Activated B cell treated with CpG ODN at 0.5 μM for 24 hours (primary cell): ENCODE measurements at regions of chr3 and their contacts with region 1.

Region 1: DNA sequence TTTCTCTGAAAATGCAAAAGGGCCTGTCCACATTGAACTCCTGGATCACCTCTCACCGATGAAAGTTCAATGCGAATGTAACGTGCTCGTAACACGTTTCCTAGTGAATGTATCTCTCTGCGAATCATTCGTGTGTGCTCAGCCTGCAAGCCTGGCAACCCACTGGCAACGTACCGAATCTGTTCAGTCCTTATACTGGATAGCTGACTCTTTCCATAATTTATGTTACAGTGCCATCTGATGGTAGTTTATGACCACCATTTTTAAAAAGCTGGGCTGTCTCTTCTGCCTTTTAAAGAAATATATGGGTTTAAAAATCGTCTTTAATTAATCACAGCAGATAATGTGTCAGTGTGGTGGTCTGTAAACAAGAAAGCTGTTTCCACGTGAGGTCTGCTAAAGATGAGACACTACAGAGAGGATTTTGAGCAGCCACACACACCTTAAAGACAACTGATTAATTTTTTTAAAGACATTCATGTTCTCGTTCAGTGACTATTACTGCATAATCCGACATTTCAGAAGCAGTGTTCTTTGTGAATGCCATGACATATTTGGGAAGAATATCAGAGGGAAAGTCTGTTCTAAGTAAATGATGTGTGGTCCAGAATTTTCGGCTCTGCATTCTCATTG is 69.4 kb upstream of the FOXP1 start:
- DNase-seq: no peak
- ATAC-seq: peak; percentile 68
- H3K4me3 Mint-ChIP-seq: no peak overlapping the region
- H3K27ac Mint-ChIP-seq: no peak overlapping the region
- H3K4me1 Mint-ChIP-seq: peaks cover 3% of the 10 kb centered on the region
- H3K27me3 Mint-ChIP-seq: no peaks in the 10 kb centered on the region
- CTCF ChIP-seq: no peak

Region 2: DNA sequence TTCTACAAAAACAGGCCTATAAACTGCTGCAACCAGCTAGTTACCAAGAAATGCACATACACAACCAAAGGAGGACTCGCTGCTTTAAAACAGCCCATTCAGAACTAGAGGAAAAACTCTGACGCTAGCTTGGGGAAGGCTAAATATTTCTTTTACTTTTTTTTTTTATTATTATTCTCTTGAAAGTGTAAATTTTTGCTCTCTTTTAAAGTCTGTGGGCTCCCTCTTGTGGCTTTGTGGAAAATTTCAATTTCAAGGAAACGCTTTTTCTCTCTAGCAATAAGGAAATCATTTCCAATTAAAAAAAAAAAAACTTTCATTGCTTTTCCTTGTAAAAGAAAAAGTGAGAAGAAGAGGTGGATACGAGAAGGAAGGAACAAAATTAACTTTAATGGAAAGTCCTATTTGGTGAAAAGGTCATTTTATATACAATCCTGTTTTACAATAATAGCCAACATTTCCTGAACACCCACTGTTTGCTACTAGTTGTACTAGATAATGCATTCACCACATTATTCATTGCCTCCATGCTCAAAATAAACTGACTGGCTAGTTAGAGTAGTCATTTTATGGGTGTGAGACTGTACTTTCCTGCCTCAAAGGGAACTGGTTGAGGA is 1704.5 kb before region 1 on chr3:
- CTCF ChIA-PET with region 1: no interaction called
- POLR2A ChIA-PET with region 1: no interaction called
- intact Hi-C with region 1: loop called (anchors 10 kb)
- DNase-seq: no peak
- ATAC-seq: no peak
- H3K4me3 Mint-ChIP-seq: no peak overlapping the region
- H3K27ac Mint-ChIP-seq: no peak overlapping the region
- H3K4me1 Mint-ChIP-seq: no peaks in the 10 kb centered on the region
- H3K27me3 Mint-ChIP-seq: no peaks in the 10 kb centered on the region
- CTCF ChIP-seq: no peak

Region 3: GRCh38 chr3:70064194-70064779 is 1588.6 kb before region 1 on chr3:
- CTCF ChIA-PET with region 1: interaction called, 18 read pairs
- POLR2A ChIA-PET with region 1: no interaction called
- intact Hi-C with region 1: loop called (anchors 1 kb)
- DNase-seq: no peak
- ATAC-seq: no peak
- H3K4me3 Mint-ChIP-seq: no peak overlapping the region
- H3K27ac Mint-ChIP-seq: no peak overlapping the region
- H3K4me1 Mint-ChIP-seq: no peaks in the 10 kb centered on the region
- H3K27me3 Mint-ChIP-seq: peaks cover 2% of the 10 kb centered on the region
- CTCF ChIP-seq: peak; percentile 79

Region 4: GRCh38 chr3:70120357-70121121 is 1532.4 kb before region 1 on chr3:
- CTCF ChIA-PET with region 1: interaction called, 38 read pairs
- POLR2A ChIA-PET with region 1: no interaction called
- intact Hi-C with region 1: loop called (anchors 1 kb)
- DNase-seq: peak; percentile 32
- ATAC-seq: peak; percentile 62
- H3K4me3 Mint-ChIP-seq: no peak overlapping the region
- H3K27ac Mint-ChIP-seq: no peak overlapping the region
- H3K4me1 Mint-ChIP-seq: no peaks in the 10 kb centered on the region
- H3K27me3 Mint-ChIP-seq: peaks cover 15% of the 10 kb centered on the region
- CTCF ChIP-seq: peak; percentile 37

Region 5: GRCh38 chr3:70531063-70531657 is 1121.7 kb before region 1 on chr3:
- CTCF ChIA-PET with region 1: interaction called, 6 read pairs
- POLR2A ChIA-PET with region 1: interaction called, 3 read pairs
- intact Hi-C with region 1: loop called (anchors 1 kb)
- DNase-seq: no peak
- ATAC-seq: no peak
- H3K4me3 Mint-ChIP-seq: no peak overlapping the region
- H3K27ac Mint-ChIP-seq: no peak overlapping the region
- H3K4me1 Mint-ChIP-seq: no peaks in the 10 kb centered on the region
- H3K27me3 Mint-ChIP-seq: no peaks in the 10 kb centered on the region
- CTCF ChIP-seq: no peak

Region 6: GRCh38 chr3:70550723-70551319 is 1102.1 kb before region 1 on chr3:
- CTCF ChIA-PET with region 1: interaction called, 19 read pairs
- POLR2A ChIA-PET with region 1: no interaction called
- intact Hi-C with region 1: loop called (anchors 1 kb)
- DNase-seq: peak; percentile 61
- ATAC-seq: peak; percentile 75
- H3K4me3 Mint-ChIP-seq: no peak overlapping the region
- H3K27ac Mint-ChIP-seq: no peak overlapping the region
- H3K4me1 Mint-ChIP-seq: no peaks in the 10 kb centered on the region
- H3K27me3 Mint-ChIP-seq: peaks cover 4% of the 10 kb centered on the region
- CTCF ChIP-seq: no peak

Region 7: GRCh38 chr3:70716832-70717231 is 936.1 kb before region 1 on chr3:
- CTCF ChIA-PET with region 1: no interaction called
- POLR2A ChIA-PET with region 1: no interaction called
- intact Hi-C with region 1: loop called (anchors 10 kb)
- DNase-seq: no peak
- ATAC-seq: no peak
- H3K4me3 Mint-ChIP-seq: no peak overlapping the region
- H3K27ac Mint-ChIP-seq: no peak overlapping the region
- H3K4me1 Mint-ChIP-seq: no peaks in the 10 kb centered on the region
- H3K27me3 Mint-ChIP-seq: peaks cover 11% of the 10 kb centered on the region
- CTCF ChIP-seq: no peak

Region 8: GRCh38 chr3:71548705-71549384 is 104.1 kb before region 1 on chr3:
- CTCF ChIA-PET with region 1: no interaction called
- POLR2A ChIA-PET with region 1: no interaction called
- intact Hi-C with region 1: no loop called
- DNase-seq: no peak
- ATAC-seq: peak; percentile 70
- H3K4me3 Mint-ChIP-seq: no peak overlapping the region
- H3K27ac Mint-ChIP-seq: no peak overlapping the region
- H3K4me1 Mint-ChIP-seq: peaks cover 25% of the 10 kb centered on the region
- H3K27me3 Mint-ChIP-seq: no peaks in the 10 kb centered on the region
- CTCF ChIP-seq: no peak